Right ventricle myocardium superior (tissue), 1 donor: ENCODE measurements at regions of chrX and their contacts with region 1.

Region 1: GRCh38 chrX:77900688-77901087 is 1.4 kb downstream of the COX7B start:
- DNase-seq: no peak
- ATAC-seq: no peak

Region 2: DNA sequence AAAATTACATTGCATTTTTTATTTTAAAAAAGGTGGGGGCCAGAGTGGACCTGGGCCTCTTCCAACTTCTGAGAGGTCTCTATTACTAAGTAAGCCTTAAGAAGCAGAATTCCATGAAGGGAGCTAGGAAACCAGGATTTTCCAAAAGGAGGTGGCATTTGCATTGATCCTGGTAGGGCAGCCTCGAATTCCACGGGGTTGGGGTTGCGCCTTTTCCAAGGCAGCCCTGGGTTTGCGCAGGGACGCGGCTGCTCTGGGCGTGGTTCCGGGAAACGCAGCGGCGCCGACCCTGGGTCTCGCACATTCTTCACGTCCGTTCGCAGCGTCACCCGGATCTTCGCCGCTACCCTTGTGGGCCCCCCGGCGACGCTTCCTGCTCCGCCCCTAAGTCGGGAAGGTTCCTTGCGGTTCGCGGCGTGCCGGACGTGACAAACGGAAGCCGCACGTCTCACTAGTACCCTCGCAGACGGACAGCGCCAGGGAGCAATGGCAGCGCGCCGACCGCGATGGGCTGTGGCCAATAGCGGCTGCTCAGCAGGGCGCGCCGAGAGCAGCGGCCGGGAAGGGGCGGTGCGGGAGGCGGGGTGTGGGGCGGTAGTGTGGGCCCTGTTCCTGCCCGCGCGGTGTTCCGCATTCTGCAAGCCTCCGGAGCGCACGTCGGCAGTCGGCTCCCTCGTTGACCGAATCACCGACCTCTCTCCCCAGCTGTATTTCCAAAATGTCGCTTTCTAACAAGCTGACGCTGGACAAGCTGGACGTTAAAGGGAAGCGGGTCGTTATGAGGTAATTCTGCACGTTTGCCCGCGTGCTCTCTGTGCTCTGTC is 203.1 kb after region 1 on chrX and contains the start of gene PGK1:
- intact Hi-C with region 1: loop called (anchors 10 kb)
- DNase-seq: peak; percentile 97
- ATAC-seq: peak; percentile 98
- total RNA-seq, gene PGK1: 407 TPM